CD8-positive, alpha-beta T cell (primary cell): ENCODE measurements at regions of chr3 and their contacts with region 1.

Region 1: DNA sequence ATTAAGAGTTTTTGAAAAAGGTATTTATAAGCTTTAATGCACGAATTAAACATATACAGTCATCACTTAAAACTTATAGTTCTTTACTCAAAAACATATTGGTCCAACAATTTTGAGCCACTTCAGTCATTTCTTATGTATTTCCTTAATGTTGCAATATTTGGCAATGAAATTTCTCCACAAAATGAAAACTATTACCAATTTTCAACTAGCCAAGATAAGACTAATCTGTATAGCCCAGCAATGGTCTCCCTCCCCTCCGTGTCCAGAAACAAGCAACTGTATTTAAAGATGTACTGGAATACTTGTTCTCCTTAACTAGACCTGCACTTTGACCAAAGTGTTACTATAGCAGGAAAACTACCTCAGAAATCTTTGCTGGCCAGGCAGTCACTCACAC is 9.2 kb downstream of the ARF4 start:
- DNase-seq: no peak
- ATAC-seq: no peak
- H3K4me3 ChIP-seq: no peak overlapping the region
- H3K4me3 Mint-ChIP-seq: no peak overlapping the region
- H3K27ac ChIP-seq: no peak overlapping the region
- H3K27ac Mint-ChIP-seq: peak overlapping the region; percentile 10
- H3K4me1 ChIP-seq: peaks cover 13% of the 10 kb centered on the region
- H3K4me1 Mint-ChIP-seq: peaks cover 43% of the 10 kb centered on the region
- H3K27me3 ChIP-seq: no peaks in the 10 kb centered on the region
- H3K27me3 Mint-ChIP-seq: no peaks in the 10 kb centered on the region
- CTCF ChIP-seq: no peak

Region 2: GRCh38 chr3:56502738-56503137 is 1085.2 kb before region 1 on chr3:
- CTCF ChIA-PET with region 1: no interaction called
- POLR2A ChIA-PET with region 1: no interaction called
- intact Hi-C with region 1: no loop called
- DNase-seq: no peak
- ATAC-seq: no peak
- H3K4me3 ChIP-seq: no peak overlapping the region
- H3K4me3 Mint-ChIP-seq: no peak overlapping the region
- H3K27ac ChIP-seq: no peak overlapping the region
- H3K27ac Mint-ChIP-seq: no peak overlapping the region
- H3K4me1 ChIP-seq: no peaks in the 10 kb centered on the region
- H3K4me1 Mint-ChIP-seq: no peaks in the 10 kb centered on the region
- H3K27me3 ChIP-seq: no peaks in the 10 kb centered on the region
- H3K27me3 Mint-ChIP-seq: peaks cover 29% of the 10 kb centered on the region
- CTCF ChIP-seq: no peak

Region 3: DNA sequence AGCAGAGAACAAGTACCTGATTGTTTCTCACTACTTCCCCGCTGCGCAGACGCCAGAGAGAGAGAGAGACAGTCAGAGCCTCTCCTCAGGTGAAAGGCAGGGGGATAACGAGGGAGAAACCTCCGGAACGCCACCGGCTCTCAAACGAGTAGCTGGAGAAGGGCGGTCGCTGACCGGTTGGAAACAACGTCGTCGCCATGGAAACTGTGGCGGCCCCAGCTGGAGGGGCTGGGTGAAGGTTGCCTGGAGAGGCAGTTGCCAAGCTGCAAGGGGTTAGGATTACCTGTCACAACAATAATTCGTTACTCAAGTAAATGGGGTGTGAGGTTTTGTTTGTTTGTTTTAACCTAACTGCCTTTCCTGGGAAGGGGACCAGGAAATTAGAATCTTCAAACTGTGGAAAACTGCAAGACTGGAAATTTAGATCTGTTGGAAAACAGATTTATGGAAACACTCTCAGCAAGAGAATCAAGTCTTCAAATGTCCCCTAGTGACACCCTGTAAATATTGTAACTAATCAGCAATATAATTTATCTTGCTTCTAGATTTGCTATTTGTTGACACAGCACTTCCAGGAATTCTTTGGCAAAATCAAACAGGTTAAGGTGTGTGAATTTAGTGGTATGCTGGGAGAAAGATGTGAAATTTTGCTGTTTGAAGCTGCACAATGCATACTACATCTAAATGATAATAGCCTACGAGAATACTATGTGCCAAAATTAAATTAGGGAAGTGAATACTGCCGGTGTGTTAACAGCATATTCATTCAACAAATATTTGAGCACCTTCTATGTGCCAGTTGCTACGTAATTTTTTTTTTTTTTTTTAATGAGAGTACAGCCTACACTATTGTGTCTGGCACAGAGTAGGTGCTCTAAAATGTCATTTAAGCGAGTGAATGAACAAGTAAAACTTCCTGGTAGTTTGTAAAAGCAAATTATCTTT is 43.5 kb before region 1 on chr3 and contains the start of gene DNAH12:
- CTCF ChIA-PET with region 1: no interaction called
- POLR2A ChIA-PET with region 1: no interaction called
- intact Hi-C with region 1: loop called in 1 of 2 experiments (anchors 1 kb)
- DNase-seq: peak in 1 of 9 experiments; percentile 9
- ATAC-seq: no peak
- H3K4me3 ChIP-seq: no peak within 1 kb of the TSS
- H3K4me3 Mint-ChIP-seq: no peak within 1 kb of the TSS
- H3K27ac ChIP-seq: no peak within 1 kb of the TSS
- H3K27ac Mint-ChIP-seq: no peak within 1 kb of the TSS
- H3K4me1 ChIP-seq: no peaks in the 10 kb centered on the region
- H3K4me1 Mint-ChIP-seq: peaks cover 9% of the 10 kb centered on the region
- H3K27me3 ChIP-seq: no peaks in the 10 kb centered on the region
- H3K27me3 Mint-ChIP-seq: no peaks in the 10 kb centered on the region
- CTCF ChIP-seq: no peak
- total RNA-seq, gene DNAH12: 0.08 to 0.27 TPM